HEK293 (cell line): ENCODE measurements at regions of chr6 and their contacts with region 1.

Region 1: GRCh38 chr6:169723200-169723909 is 945 bp downstream of the PHF10 start:
- H3K4me3 ChIP-seq: peak overlapping the region; percentile 89
- H3K27ac ChIP-seq: peak overlapping the region; percentile 90
- H3K4me1 ChIP-seq: 0 out of 2 replicates have a peak, but pooled peaks cover 4% of the 10 kb centered on the region
- CTCF ChIP-seq: no peak

Region 2: DNA sequence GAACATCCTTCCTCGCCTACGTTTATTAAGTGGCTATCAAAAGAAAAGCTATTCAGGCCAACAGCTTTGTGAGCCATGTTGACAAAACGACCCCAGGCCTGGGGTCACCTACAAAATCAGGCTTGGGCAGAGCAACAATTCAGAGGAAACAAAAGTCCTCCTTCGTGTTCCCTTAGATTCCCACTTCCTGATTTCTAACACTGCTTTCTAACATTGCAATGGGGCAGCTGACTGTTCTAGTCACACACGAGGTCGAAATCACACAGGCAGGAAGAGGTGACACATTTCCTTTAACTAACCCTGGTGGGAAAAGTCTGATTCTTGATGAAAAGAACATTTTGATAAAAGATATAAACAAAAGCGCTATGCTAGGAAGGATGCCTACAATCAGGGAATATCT is 53.5 kb before region 1 on chr6:
- CTCF ChIA-PET with region 1: no interaction called
- POLR2A ChIA-PET with region 1: no interaction called
- H3K4me3 ChIP-seq: no peak overlapping the region
- H3K27ac ChIP-seq: no peak overlapping the region
- H3K4me1 ChIP-seq: no peaks in the 10 kb centered on the region
- CTCF ChIP-seq: no peak

Region 3: DNA sequence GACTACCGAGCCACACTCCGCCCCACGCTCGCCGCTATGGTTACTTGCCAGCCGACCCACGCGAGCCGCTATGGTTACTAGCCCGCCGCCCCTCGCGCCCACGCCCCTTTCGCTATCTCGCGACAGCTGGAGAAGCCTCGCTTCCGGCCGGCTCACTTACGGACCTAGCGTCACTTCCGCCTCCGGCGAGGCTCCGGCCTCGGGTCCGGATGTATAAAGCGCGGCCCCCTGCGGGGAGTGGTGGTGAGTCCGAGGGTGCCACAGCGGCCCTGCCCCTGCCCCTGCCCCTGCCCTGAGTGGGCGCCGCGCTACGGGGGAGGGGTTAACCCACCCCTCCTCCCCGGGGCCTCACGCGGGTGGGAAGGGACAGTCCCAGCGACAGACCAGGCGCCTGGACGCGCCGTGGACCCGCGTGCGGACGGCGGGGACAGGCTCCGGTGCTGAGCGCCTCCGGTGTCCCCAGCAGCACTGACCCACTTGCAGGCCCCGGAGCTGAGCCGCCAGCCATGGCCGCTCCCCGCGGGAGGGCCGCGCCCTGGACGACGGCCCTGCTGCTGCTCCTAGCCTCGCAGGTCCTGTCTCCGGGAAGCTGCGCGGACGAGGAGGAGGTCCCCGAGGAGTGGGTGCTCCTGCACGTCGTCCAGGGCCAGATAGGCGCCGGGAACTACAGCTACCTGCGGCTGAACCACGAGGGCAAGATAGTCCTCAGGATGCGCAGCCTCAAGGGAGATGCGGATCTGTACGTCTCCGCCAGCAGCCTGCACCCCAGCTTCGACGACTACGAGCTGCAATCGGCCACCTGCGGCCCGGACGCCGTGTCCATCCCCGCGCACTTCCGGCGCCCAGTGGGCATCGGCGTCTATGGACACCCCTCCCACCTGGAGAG is 21.2 kb before region 1 on chr6 and contains the starts of genes C6orf120 and WDR27:
- CTCF ChIA-PET with region 1: interaction called, 5 read pairs
- POLR2A ChIA-PET with region 1: interaction called, 33 read pairs
- H3K4me3 ChIP-seq: peak within 1 kb of the TSS; percentile 97
- H3K27ac ChIP-seq: peak within 1 kb of the TSS; percentile 86
- H3K4me1 ChIP-seq: peaks cover 9% of the 10 kb centered on the region; the same call in 1 of the 2 replicates
- CTCF ChIP-seq: no peak

Region 4: DNA sequence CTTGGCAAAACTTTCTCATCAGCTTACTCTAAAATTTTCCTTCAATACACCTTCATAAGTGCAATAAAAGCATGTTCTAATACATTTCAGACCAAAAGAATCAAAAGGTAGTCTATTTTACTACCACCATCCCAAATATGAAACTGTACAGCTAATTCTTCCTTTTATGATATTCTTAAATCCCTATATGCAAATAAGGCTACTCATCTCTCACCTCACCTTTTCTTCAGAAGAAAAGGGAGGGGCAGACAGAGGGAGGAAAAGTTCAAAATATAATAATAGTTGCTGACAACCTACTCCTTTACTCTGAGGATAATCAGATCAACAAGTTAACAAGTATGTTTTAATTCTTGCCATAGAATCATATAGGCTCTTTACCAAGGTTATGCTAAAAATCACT is 14.1 kb before region 1 on chr6:
- CTCF ChIA-PET with region 1: interaction called, 21 read pairs
- POLR2A ChIA-PET with region 1: interaction called, 8 read pairs
- H3K4me3 ChIP-seq: no peak overlapping the region
- H3K27ac ChIP-seq: no peak overlapping the region
- H3K4me1 ChIP-seq: 0 out of 2 replicates have a peak, but pooled peaks cover under 1% of the 10 kb centered on the region
- CTCF ChIP-seq: no peak

Region 5: GRCh38 chr6:169800668-169801395 is 77.5 kb after region 1 on chr6:
- CTCF ChIA-PET with region 1: no interaction called
- POLR2A ChIA-PET with region 1: no interaction called
- H3K4me3 ChIP-seq: no peak overlapping the region
- H3K27ac ChIP-seq: peak overlapping the region; percentile 59; the same call in 1 of the 2 replicates
- H3K4me1 ChIP-seq: peaks cover 19% of the 10 kb centered on the region
- CTCF ChIP-seq: no peak